Naive thymus-derived CD4-positive, alpha-beta T cell (primary cell): ENCODE measurements at regions of chr19 and their contacts with region 1.

Region 1: GRCh38 chr19:11380653-11381534 is 3.2 kb downstream of the EPOR start:
- DNase-seq: peak; percentile 88 to 99 (median 98)
- ATAC-seq: peak; percentile 90
- H3K4me3 ChIP-seq: peak overlapping the region; percentile 69
- H3K4me3 Mint-ChIP-seq: peak overlapping the region; percentile 86 to 99 (median 93)
- H3K27ac ChIP-seq: peak overlapping the region; percentile 86
- H3K27ac Mint-ChIP-seq: peak overlapping the region; percentile 91 to 99 (median 98)
- H3K4me1 ChIP-seq: peaks cover 33 to 44% of the 10 kb centered on the region in 2 donors
- H3K4me1 Mint-ChIP-seq: peaks cover 36 to 65% (median 52%) of the 10 kb centered on the region in 7 donors
- H3K27me3 ChIP-seq: no peaks in the 10 kb centered on the region
- H3K27me3 Mint-ChIP-seq: peaks cover 0 to 35% (median 5%) of the 10 kb centered on the region in 5 donors

Region 2: DNA sequence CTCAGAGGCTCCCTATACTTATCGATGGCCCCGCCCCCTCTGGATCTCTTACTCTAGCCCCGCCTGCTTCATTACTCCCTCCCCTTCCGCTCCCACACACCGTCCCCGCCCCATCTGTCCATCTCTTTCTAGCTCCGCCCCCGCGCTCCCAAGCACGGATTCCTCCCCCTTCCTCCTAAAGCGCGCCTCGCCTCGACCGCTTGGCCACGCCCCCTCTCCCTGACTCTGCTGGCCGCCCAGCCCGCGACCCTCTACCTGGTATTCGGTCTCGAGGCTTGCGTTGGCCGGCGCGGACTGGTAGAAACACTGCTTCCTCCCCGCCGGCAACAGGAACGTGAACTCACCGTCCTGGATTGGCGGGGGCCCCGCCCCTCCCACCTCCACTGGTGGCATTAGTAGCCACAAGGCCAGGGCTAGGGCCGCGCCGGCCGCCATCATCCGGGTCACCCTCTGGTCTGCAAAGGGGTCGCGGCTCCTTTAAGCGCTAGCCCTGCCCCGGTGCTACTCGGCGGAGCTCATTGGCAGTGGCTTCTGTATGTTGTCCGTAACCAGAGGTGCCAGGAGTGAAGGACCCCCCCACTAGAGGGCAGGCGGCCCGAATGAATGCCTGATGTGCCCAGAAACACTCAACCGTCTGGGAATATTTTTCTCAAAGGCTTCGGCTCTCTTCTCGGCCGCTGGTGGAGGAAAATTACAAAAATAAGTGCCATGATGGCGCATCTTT is 545.0 kb before region 1 on chr19 and contains the start of gene TMED1:
- CTCF ChIA-PET with region 1: no interaction called
- POLR2A ChIA-PET with region 1: no interaction called
- intact Hi-C with region 1: loop called in 1 of 2 experiments (anchors 2 kb)
- DNase-seq: peak; percentile 81 to 97 (median 93)
- ATAC-seq: peak; percentile 92
- H3K4me3 ChIP-seq: peak within 1 kb of the TSS; percentile 98
- H3K4me3 Mint-ChIP-seq: peak within 1 kb of the TSS; percentile 82 to 99 (median 96)
- H3K27ac ChIP-seq: peak within 1 kb of the TSS; percentile 93
- H3K27ac Mint-ChIP-seq: peak within 1 kb of the TSS; percentile 98 to 100 (median 99)
- H3K4me1 ChIP-seq: peaks cover 8 to 13% of the 10 kb centered on the region in 2 donors
- H3K4me1 Mint-ChIP-seq: peaks cover 12 to 20% (median 15%) of the 10 kb centered on the region in 7 donors
- H3K27me3 ChIP-seq: no peaks in the 10 kb centered on the region
- H3K27me3 Mint-ChIP-seq: no peaks in the 10 kb centered on the region
- total RNA-seq, gene TMED1: 7.6 to 12.8 (median 9.9) TPM

Region 3: DNA sequence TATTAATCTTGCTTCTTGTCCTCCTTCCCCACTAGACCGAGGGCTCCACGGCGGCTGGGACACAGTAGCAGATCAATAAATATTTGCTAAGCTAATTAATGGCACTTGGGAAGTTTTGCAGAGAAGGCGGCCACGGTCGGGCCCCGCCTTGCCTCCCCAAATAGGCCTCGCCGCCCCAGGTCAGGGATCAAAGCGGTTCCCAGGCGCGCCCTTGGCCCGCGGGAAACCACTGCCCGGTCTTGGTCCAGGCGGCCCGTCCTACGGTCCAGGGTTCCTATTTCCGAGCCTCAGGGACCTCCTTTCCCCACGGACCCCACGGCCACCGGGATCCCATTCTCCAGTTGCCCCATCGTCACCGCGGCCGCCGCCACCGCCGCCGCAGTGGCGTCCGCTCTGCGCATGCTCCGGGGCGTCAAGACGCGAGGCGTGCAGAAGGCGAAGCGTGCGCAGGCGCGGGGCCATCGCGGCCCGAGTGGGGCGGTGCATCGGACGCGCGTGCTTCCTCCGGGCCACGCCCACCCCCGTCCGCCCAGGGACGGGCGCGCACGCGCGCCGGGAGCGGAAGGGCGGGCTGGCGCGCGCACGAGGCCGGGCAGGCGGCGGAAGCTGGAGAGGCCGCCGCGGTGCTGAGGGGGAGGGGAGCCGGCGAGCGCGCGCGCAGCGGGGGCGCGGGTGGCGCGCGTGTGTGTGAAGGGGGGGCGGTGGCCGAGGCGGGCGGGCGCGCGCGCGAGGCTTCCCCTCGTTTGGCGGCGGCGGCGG is 420.4 kb before region 1 on chr19 and contains the start of gene SMARCA4:
- CTCF ChIA-PET with region 1: no interaction called
- POLR2A ChIA-PET with region 1: no interaction called
- intact Hi-C with region 1: no loop called
- DNase-seq: peak; percentile 96 to 100 (median 99)
- ATAC-seq: peak; percentile 96
- H3K4me3 ChIP-seq: peak within 1 kb of the TSS; percentile 89
- H3K4me3 Mint-ChIP-seq: peak within 1 kb of the TSS; percentile 84 to 94 (median 90)
- H3K27ac ChIP-seq: peak within 1 kb of the TSS; percentile 89
- H3K27ac Mint-ChIP-seq: peak within 1 kb of the TSS; percentile 79 to 94 (median 93)
- H3K4me1 ChIP-seq: peaks cover 28 to 33% of the 10 kb centered on the region in 2 donors
- H3K4me1 Mint-ChIP-seq: peaks cover 22 to 42% (median 34%) of the 10 kb centered on the region in 7 donors
- H3K27me3 ChIP-seq: no peaks in the 10 kb centered on the region
- H3K27me3 Mint-ChIP-seq: no peaks in the 10 kb centered on the region
- total RNA-seq, gene SMARCA4: 96.0 to 126 (median 104) TPM

Region 4: DNA sequence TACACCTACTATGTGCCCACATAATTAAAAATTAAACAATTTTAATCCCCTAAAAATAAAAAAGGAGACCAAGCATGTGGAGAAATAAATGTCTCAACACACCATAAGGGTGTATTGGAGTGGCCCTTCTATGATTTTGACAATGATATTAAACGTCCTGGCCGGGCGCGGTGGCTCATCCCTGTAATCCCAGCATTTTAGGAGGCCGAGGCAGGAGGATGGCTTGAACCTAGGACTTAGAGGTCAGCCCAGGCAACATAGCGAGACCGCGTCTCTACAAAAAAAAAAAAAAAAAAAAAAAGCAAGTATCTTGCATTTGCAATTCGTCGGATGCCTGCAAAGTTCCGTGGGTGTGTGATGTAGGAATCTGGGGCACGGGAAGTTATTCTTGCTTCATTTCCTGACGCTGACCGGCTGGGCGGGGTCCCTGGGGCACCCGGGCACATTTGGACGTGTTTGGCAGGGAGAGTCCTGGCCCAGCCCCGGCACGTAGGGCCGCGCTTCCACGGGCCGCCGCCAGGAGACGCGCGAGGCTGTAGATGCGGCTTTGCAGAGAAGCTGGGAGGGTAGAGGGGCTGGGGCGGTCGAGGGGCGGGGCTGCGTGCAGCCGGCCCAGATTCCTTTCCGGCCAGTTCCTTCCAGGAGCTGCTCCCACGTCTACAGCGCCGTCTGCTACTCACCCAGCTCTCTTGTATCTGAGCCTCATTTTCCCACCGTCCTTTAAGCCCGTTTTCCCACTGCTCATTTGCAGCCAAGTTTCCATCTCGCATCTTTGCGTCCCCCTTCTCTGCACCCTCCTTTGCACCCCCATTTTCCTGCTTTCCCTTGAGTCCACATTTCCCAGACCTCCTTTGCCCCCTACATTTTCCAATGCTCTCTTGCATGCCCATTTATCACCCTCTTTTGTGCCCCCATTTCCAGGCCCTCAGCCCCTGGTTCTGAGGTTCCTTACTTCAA is 87.2 kb before region 1 on chr19:
- CTCF ChIA-PET with region 1: no interaction called
- POLR2A ChIA-PET with region 1: no interaction called
- intact Hi-C with region 1: loop called (anchors 2 kb)
- DNase-seq: peak; percentile 55 to 88 (median 75)
- ATAC-seq: peak; percentile 98
- H3K4me3 ChIP-seq: no peak overlapping the region
- H3K4me3 Mint-ChIP-seq: peak overlapping the region in 7 of 10 donors; percentile 13 to 69 (median 60)
- H3K27ac ChIP-seq: no peak overlapping the region
- H3K27ac Mint-ChIP-seq: peak overlapping the region in 2 of 9 donors; percentile 31 to 80
- H3K4me1 ChIP-seq: peaks cover 0 to 4% of the 10 kb centered on the region in 2 donors
- H3K4me1 Mint-ChIP-seq: peaks cover 8 to 11% (median 9%) of the 10 kb centered on the region in 7 donors
- H3K27me3 ChIP-seq: no peaks in the 10 kb centered on the region
- H3K27me3 Mint-ChIP-seq: peaks cover 5 to 69% (median 15%) of the 10 kb centered on the region in 5 donors

Region 5: GRCh38 chr19:11405846-11406643 is 25.2 kb after region 1 on chr19:
- CTCF ChIA-PET with region 1: interaction called, 13 read pairs
- POLR2A ChIA-PET with region 1: no interaction called
- intact Hi-C with region 1: loop called in 1 of 2 experiments (anchors 1 kb)
- DNase-seq: peak in 5 of 9 donors; percentile 29 to 46 (median 33)
- ATAC-seq: peak; percentile 68
- H3K4me3 ChIP-seq: no peak overlapping the region
- H3K4me3 Mint-ChIP-seq: no peak overlapping the region
- H3K27ac ChIP-seq: no peak overlapping the region
- H3K27ac Mint-ChIP-seq: no peak overlapping the region
- H3K4me1 ChIP-seq: no peaks in the 10 kb centered on the region
- H3K4me1 Mint-ChIP-seq: peaks cover 0 to 5% (median 0%) of the 10 kb centered on the region in 7 donors
- H3K27me3 ChIP-seq: no peaks in the 10 kb centered on the region
- H3K27me3 Mint-ChIP-seq: peaks cover 4 to 20% (median 7%) of the 10 kb centered on the region in 5 donors

Region 6: DNA sequence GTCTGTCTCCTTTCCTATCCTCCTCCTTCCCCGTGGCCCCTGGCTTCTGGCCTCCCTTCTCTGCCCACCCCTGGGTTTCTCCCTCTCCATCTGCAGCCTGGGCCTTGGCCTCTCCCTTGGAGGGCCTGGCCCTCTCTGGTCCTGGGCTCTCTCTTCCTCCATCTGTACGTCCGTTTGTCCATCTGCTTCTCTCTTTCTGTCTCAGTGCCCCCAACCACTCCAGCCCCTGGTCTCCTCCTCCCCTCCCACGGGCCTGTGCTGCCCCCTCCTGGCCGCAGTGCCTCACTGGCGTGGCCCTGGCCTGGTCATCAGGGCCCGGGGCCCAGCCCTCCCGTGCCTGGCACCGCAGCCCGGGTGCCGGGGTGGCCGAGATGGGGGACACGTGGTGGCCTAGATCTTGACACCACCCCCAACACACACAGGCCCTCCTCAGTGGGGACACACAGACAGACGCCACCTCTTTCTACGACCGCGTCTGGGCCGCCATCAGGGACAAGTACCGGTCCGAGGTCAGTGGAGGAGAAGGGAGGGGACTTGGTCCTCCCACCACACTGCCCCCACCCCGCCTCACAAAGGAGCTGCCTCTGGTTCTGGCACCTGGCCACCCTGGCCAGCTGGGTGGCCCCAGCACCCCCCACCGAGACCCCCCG is 65.9 kb after region 1 on chr19:
- CTCF ChIA-PET with region 1: interaction called, 7 read pairs
- POLR2A ChIA-PET with region 1: interaction called, 3 read pairs
- intact Hi-C with region 1: loop called in 1 of 2 experiments (anchors 2 kb)
- DNase-seq: peak in 7 of 9 donors; percentile 26 to 61 (median 44)
- ATAC-seq: peak; percentile 80
- H3K4me3 ChIP-seq: no peak overlapping the region
- H3K4me3 Mint-ChIP-seq: no peak overlapping the region
- H3K27ac ChIP-seq: no peak overlapping the region
- H3K27ac Mint-ChIP-seq: peak overlapping the region in 1 of 9 donors; percentile 36
- H3K4me1 ChIP-seq: no peaks in the 10 kb centered on the region
- H3K4me1 Mint-ChIP-seq: peaks cover 0 to 5% (median 3%) of the 10 kb centered on the region in 7 donors
- H3K27me3 ChIP-seq: no peaks in the 10 kb centered on the region
- H3K27me3 Mint-ChIP-seq: no peaks in the 10 kb centered on the region

Region 7: DNA sequence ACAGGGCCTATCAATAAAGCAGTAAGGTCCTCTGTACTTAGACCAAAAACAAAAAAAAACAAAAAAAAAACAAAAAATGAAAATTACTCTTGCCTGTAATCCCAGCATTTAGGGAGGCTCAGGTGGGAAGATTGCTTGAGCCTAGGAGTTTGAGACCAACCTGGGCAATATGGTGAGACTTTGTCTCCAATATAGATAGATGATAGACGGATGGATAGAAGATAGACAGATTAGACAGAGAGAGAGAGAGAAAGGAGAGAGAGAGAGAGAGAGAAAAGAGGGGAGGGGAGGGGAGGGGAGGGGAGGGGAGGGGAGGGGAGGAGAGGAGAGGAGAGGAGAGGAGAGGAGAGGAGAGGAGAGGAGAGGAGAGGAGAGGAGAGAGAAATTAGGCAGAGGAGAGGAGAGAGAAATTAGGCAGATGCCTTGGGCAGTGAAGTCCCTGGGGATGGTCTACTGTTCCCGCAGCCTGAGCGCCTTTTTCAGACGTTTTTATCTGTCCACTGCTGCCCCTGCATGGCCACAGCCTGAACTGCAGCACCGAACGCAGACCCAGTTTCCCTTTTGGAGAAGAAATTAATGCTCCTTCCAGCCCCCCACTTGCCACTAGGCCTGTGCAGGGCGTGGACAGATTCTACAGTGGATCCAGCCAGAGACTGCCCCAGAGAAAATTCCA is 206.5 kb after region 1 on chr19:
- CTCF ChIA-PET with region 1: interaction called, 3 read pairs
- POLR2A ChIA-PET with region 1: no interaction called
- intact Hi-C with region 1: loop called (anchors 1 to 5 kb)
- DNase-seq: peak; percentile 58 to 80 (median 66)
- ATAC-seq: peak; percentile 95
- H3K4me3 ChIP-seq: no peak overlapping the region
- H3K4me3 Mint-ChIP-seq: no peak overlapping the region
- H3K27ac ChIP-seq: no peak overlapping the region
- H3K27ac Mint-ChIP-seq: peak overlapping the region in 1 of 9 donors; percentile 36
- H3K4me1 ChIP-seq: no peaks in the 10 kb centered on the region
- H3K4me1 Mint-ChIP-seq: peaks cover 0 to 16% (median 7%) of the 10 kb centered on the region in 7 donors
- H3K27me3 ChIP-seq: no peaks in the 10 kb centered on the region
- H3K27me3 Mint-ChIP-seq: no peaks in the 10 kb centered on the region